BJ (cell line): ENCODE measurements at regions of chr6 and their contacts with region 1.

Region 1: GRCh38 chr6:148972481-148972880 is 225.7 kb downstream of the UST start:
- DNase-seq: no peak
- H3K4me3 ChIP-seq: no peak overlapping the region
- H3K27me3 ChIP-seq: peaks cover 3% of the 10 kb centered on the region
- CTCF ChIP-seq: no peak

Region 2: DNA sequence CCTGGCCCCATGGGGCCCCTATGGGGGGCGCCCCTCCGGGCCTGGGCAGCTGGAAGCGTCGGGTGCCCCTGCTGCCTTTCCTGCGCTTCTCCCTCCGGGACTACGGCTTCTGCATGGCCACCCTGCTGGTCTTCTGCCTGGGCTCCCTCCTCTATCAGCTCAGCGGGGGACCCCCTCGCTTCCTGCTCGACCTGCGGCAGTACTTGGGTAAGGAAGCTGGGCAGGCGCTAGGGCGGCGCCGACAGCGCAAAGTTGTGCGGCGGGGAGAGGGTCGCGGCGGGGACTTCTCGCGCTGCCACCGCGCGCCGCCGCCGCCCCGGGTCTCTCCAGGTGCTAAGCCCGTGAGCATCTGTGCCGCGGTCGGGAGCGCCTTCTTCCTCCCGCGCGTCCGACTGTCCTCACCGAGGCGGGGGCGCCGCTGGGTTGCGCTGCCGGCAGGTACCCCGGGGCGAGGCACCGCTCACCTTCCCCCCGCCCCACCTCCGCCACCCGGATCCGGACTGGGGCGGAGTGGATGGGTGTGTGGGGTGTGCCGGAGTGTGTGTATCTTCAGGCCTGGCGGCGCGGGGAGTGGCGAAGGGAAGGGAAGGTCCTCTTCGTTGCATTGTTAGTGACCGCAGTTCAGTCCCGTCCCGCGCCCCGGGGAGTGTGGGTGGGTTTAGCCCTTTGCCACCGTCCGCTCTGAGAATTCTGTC is 224.9 kb before region 1 on chr6:
- CTCF ChIA-PET with region 1: interaction called, 10 read pairs
- POLR2A ChIA-PET with region 1: no interaction called
- DNase-seq: no peak
- H3K4me3 ChIP-seq: peak overlapping the region; percentile 81
- H3K27me3 ChIP-seq: no peaks in the 10 kb centered on the region
- CTCF ChIP-seq: peak; percentile 16; the same call in 1 of the 2 replicates